ENCODE measurements at regions of chr12 and their contacts with region 1.

Region 1: GRCh38 chr12:120580787-120581723 is at the start of gene POP5:
- DNase-seq: peak; percentile 95 to 98 (median 98)
- ATAC-seq: peak; percentile 93 to 95
- H3K4me3 ChIP-seq: peak within 1 kb of the TSS; percentile 74
- H3K27ac ChIP-seq: peak within 1 kb of the TSS; percentile 60
- H3K4me1 ChIP-seq: no peaks in the 10 kb centered on the region
- H3K27me3 ChIP-seq: no peaks in the 10 kb centered on the region
- total RNA-seq, gene POP5: 31.4 to 48.4 (median 41.5) TPM

Region 2: DNA sequence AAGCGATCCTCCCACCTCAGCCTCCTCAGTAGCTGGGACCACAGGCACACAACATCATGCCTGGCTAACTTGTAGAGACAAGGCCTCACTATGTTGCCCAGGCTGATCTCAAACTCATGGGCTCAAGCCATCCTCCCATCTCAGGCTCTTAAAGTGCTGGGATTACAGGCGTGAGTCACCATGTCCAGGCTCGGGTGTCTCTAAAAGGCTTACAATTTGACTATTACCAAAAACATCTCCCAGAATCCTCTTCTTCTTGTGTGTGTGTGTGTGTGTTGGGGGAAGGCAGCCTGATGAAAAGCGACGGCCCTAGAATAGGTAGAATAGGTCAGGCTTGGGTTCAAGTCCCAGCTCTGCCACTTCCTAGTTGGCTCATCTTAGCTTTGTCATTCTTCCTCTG is 228.9 kb before region 1 on chr12:
- intact Hi-C with region 1: no loop called
- DNase-seq: no peak
- ATAC-seq: no peak
- H3K4me3 ChIP-seq: no peak overlapping the region
- H3K27ac ChIP-seq: no peak overlapping the region
- H3K4me1 ChIP-seq: no peaks in the 10 kb centered on the region
- H3K27me3 ChIP-seq: no peaks in the 10 kb centered on the region

Region 3: DNA sequence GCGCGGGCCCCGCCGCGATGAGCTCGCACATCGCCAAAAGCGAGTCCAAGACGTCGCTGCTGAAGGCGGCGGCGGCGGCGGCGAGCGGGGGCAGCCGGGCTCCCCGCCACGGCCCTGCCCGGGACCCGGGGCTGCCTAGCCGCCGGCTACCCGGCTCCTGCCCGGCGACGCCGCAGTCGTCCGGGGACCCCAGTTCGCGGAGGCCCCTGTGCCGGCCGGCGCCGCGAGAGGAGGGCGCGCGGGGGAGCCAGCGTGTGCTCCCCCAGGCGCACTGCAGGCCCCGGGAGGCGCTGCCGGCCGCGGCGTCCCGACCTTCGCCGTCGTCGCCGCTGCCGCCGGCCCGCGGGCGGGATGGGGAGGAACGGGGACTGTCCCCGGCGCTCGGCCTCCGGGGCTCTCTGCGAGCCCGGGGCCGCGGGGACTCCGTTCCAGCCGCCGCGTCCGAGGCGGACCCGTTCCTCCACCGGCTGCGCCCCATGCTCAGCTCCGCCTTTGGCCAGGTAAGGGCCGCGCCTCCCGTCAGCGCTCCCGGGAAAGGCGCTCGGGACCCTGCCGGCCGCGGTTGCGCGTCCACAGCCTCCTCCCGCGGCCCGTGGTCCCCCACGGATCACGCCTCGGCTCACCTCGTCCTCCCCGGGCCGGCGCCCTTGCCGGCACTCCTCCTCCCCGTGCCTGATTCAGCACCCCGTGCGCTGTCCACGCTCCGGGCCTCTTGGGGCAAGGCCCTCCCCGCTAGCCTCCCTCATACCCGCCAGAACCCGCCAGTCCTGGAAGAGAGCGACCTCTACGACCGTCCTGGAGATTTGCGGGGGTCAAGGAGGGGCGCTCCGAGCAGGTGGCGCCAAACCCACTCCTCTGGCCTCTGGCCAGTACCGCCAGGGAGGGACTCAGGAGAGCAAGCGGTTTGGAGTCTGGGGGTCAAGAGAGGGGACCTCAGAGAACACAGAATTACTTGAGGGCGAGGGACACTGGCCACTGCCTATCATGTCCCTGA is 60.1 kb after region 1 on chr12:
- intact Hi-C with region 1: loop called in 2 of 4 experiments (anchors 5 kb)
- DNase-seq: peak; percentile 60 to 83 (median 79)
- ATAC-seq: peak; percentile 87 to 88
- H3K4me3 ChIP-seq: peak overlapping the region; percentile 94
- H3K27ac ChIP-seq: no peak overlapping the region
- H3K4me1 ChIP-seq: no peaks in the 10 kb centered on the region
- H3K27me3 ChIP-seq: no peaks in the 10 kb centered on the region

Region 4: DNA sequence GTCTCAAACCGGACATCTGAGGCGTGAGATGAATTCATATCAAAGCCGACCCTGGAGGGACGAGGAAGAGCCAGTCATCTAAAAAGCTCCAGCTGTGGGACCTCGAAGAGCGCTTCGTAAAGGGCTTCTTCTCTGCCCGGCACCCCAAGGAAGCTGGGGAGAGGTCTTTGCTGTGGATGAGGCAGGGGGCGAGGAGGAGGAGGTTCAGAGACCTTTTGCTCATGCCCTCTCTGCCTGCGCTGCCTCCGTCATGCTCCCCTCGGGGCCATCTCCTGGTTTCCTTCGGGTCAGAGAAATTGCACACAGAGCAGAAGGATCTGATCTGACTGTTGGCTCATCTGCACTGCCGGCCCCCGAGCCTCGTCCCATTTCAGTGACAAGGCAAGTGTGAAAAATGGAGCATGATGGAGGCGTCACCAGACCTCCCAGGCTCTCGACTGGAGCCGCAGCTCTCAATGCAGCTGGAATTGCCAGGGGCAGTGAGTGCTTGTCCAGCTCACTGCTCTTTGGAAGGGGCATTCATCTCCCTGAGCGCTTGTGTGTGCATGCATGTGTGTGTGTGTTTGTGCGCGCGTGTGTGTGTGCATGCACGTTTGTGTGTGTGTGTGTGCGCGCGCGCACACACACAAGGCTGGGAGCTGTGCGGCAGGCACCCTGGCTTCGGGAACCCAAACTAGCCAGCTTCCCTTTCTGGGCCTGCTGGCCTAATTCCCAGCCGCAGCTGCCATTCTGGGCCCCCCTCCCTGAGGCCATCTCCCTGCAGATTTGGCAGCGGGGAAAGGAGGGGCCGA is 68.6 kb after region 1 on chr12:
- intact Hi-C with region 1: loop called in 2 of 4 experiments (anchors 5 kb)
- DNase-seq: peak in 2 of 3 donors; percentile 81 to 84
- ATAC-seq: peak in 1 of 2 donors; percentile 3
- H3K4me3 ChIP-seq: peak overlapping the region; percentile 59
- H3K27ac ChIP-seq: no peak overlapping the region
- H3K4me1 ChIP-seq: peaks cover 14% of the 10 kb centered on the region
- H3K27me3 ChIP-seq: no peaks in the 10 kb centered on the region

Region 5: GRCh38 chr12:120710031-120710804 is 129.2 kb after region 1 on chr12 and contains the start of gene UNC119B:
- intact Hi-C with region 1: loop called in 3 of 4 experiments (anchors 2 to 5 kb)
- DNase-seq: peak; percentile 82 to 93 (median 90)
- ATAC-seq: peak; percentile 94
- H3K4me3 ChIP-seq: peak within 1 kb of the TSS; percentile 92
- H3K27ac ChIP-seq: peak within 1 kb of the TSS; percentile 86
- H3K4me1 ChIP-seq: peaks cover 11% of the 10 kb centered on the region
- H3K27me3 ChIP-seq: no peaks in the 10 kb centered on the region
- total RNA-seq, gene UNC119B: 15.7 to 17.8 (median 16.7) TPM

Region 6: DNA sequence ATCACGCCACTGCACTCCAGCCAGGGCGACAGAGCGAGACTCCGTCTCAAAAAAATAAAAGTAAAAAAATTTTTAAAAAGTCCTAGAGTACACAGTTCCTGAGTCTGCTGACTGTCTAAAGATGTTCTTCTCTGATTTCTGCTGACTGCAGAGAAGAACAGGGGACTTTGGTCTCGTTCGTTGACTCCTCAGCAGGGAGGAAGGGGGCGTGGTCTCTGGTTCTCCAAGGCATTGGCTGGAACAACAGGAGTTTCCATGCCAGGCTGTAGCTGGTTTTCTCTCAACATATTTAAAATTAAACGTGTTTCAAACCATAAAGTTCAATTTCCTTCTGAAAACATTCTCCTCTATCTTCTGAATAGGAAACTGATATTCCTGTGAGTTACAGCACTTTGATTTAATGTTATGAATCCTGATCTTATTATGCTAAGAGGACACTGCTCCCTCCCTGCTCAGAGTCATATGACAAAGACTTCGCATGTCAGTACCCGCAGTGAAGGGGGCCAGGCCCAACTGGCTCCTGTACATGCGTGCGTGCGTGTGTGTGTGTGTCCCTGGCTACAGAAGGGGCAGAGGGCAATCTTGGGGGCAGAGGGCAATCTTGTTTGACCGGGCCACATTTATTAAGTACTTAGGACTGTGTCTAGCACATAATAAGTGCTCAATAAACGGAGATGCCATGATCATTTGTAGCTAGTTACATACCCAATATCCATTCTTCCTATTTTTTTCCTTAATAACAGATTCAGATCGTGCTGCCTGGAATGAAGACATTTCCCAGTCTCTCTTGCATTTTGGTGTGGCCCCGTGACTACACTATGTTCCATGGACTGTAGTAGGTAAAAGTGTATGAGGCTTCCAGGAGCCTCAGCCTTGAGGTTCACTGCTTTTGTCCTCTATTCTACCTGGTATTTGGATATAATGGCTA is 380.8 kb after region 1 on chr12:
- intact Hi-C with region 1: loop called in 1 of 4 experiments (anchors 10 kb)
- DNase-seq: peak; percentile 41 to 73 (median 71)
- ATAC-seq: peak; percentile 41 to 42
- H3K4me3 ChIP-seq: no peak overlapping the region
- H3K27ac ChIP-seq: no peak overlapping the region
- H3K4me1 ChIP-seq: no peaks in the 10 kb centered on the region
- H3K27me3 ChIP-seq: no peaks in the 10 kb centered on the region

Region 7: DNA sequence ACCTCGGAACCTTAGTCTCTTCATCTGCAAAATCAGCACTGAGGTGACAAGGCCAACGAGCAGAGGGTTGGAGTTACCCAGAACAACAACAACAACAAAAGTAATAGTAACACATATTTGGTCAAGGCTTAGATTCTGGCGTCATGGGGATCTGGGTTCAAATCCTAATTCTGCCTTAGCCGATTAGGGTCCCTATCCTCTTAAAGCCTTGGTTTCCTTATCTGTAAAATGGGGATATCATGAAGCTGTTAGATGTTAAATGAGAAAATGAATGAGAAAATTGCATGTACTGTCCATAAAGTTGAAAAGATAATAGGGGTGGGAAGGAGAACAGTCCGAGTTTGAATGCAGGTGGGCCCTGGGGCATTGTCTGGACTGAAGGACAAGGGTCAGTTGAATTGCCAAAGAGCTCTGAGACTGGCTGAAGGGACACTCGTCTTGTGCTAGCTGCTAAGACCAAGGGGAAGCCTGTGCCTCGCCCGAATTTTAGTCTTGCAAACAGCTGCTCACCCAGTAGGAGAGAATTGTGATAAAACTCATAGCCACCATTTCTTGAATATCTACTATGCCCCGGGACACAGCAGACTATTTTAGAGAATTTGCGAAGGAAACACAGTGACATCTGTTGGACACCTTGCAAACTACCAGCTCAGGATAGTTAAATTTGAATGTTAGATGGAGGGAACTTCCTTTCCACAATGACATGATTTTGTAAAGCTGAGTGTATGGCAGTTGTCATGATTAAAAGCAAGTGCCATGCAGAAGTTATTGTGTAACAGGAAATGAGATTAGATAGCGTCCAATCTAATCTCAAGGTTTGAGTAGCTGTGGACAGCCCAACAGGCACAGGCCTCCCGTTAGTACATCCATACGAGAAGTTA is 390.5 kb after region 1 on chr12:
- intact Hi-C with region 1: loop called (anchors 5 to 10 kb)
- DNase-seq: no peak
- ATAC-seq: peak; percentile 82 to 83
- H3K4me3 ChIP-seq: no peak overlapping the region
- H3K27ac ChIP-seq: no peak overlapping the region
- H3K4me1 ChIP-seq: no peaks in the 10 kb centered on the region
- H3K27me3 ChIP-seq: no peaks in the 10 kb centered on the region

Region 8: GRCh38 chr12:121095544-121096198 is 514.6 kb after region 1 on chr12:
- intact Hi-C with region 1: loop called in 1 of 4 experiments (anchors 10 kb)
- DNase-seq: peak; percentile 71 to 88 (median 85)
- ATAC-seq: peak; percentile 90 to 95
- H3K4me3 ChIP-seq: peak overlapping the region; percentile 19
- H3K27ac ChIP-seq: no peak overlapping the region
- H3K4me1 ChIP-seq: peaks cover 6% of the 10 kb centered on the region
- H3K27me3 ChIP-seq: no peaks in the 10 kb centered on the region

Measured in right cardiac atrium (tissue), 5 donors.